ENCODE measurements at regions of chr11 and their contacts with region 1.

Region 1: GRCh38 chr11:68056317-68057285 is 17.8 kb downstream of the TCIRG1 start:
- DNase-seq: no peak
- ATAC-seq: no peak

Region 2: GRCh38 chr11:67277231-67277961 is 779.2 kb before region 1 on chr11:
- intact Hi-C with region 1: no loop called
- DNase-seq: peak; percentile 99
- ATAC-seq: peak; percentile 86

Region 3: DNA sequence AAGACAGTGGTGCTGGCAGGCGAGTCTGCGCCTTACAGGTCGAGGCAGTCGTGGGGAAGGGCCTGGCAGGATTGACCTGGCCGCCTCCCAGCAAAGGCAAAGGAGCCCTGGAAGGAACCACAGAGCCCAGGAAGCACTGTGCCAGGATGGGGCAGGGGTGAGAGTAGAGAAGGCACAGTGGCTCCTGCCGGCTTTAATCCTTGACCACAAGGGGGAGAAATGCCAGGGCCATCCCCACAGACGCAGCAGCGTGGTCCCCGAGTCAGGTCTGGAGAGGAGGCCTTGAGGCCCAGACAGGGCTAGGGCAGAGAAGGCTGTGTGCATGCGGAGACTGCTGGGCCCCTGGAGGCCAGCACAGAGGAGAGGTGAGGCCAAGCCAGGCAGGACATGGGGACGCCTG is 36.0 kb before region 1 on chr11:
- intact Hi-C with region 1: no loop called
- DNase-seq: no peak
- ATAC-seq: peak; percentile 8

Region 4: DNA sequence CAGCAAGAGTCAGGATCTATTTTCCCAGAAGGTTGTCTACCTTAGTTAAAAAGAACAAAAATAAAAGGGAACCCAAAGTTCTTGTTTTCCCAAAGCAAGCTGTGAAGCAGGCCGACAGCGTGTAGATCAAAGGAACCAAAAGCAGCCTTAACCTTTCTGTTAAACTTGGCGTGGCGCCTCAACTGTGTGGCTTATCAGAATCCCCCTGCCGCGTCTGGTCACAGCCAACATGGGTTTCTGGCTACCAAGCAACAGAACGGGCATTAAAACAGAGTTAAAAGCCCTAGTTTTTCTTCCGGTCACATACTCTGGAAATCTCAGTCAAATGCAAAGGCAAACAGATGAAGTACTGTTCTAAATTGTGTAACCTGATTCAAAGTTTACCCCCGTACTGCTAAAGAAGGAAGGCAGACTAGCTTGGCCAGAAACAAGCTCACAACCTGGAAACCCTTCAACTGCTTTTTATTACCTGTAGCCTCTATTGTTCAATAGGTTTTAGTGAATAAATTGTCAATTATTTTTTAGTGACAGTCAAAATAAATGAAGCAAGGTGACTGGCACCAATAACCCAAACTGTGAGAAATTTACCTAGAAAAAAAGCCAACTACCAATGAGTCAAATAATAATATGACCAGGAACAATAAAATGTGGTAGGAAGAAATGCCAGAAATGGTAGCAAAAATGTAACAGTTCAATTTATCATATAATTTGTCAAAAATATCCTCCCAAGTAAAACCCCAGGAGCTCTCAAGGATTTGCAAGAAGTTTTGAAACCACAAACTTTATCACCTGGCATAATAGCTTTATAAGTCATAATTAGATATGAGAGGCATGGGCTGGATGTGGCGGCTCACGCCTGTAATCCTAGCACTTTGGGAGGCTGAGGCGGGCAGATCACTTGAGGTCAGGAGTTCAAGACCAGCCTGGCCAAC is 43.1 kb after region 1 on chr11:
- intact Hi-C with region 1: no loop called
- DNase-seq: no peak
- ATAC-seq: no peak

Region 5: GRCh38 chr11:70029115-70029830 is 1972.7 kb after region 1 on chr11:
- intact Hi-C with region 1: loop called (anchors 5 kb)
- DNase-seq: no peak
- ATAC-seq: no peak